Breast epithelium (tissue), 4 donors: ENCODE measurements at regions of chr14 and their contacts with region 1.

Region 1: GRCh38 chr14:57317316-57317715 is 48.5 kb downstream of the AP5M1 start:
- DNase-seq: peak; percentile 45 to 57
- H3K4me3 ChIP-seq: no peak overlapping the region
- H3K27ac ChIP-seq: no peak overlapping the region
- H3K4me1 ChIP-seq: no peaks in the 10 kb centered on the region
- H3K27me3 ChIP-seq: peaks cover 0 to 3% of the 10 kb centered on the region in 2 donors
- CTCF ChIP-seq: peak; percentile 59 to 65 (median 63)
- POLR2A ChIP-seq: no peak

Region 2: DNA sequence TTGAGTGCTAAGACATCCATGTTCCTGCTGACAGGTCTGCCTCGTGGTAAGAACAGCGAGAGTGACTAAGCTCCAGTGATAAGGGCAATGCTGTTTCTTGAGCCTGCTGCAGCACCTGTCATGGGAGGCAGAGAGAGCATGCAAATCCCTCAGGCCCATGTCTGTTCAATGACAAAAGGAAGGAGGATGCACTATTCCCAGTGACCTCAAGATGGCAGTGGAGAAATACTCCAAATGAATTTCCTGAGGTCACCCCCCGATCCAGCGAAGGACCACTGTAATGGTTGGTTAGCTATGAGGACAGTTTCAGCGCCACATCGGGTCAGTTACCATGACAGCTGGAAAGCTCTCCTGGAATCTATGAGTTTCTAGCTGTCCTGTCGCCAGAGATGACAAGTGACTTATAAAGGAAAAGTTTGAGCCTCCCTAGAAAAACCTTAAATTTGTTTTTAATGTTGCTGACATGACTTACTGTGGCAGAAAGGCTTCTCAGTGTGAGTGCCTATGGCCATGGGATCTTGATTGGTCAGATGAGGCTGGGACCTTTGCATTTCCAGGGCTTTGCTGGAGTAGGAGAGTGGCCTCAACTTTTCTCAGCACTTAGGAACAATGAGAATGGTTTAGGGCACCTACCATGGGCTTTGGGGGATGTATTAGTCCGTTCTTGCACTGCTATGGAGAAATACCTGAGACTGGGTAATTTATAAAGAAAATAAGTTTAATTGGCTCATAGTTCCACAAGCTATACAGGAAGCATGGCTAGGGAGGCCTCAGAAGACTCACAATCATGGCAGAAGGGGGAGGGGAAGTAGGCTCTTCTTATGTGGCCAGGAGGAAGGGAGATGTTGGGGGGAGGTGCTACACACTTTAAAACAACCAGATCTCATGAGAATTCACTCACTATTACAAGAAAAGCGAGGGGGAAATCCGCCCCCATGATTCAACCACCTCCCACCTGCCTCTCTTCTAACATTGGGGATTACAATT is 825.7 kb before region 1 on chr14:
- intact Hi-C with region 1: loop called (anchors 10 kb)
- DNase-seq: no peak
- H3K4me3 ChIP-seq: no peak overlapping the region
- H3K27ac ChIP-seq: no peak overlapping the region
- H3K4me1 ChIP-seq: no peaks in the 10 kb centered on the region
- H3K27me3 ChIP-seq: no peaks in the 10 kb centered on the region
- CTCF ChIP-seq: peak in 2 of 3 donors; percentile 51 to 64
- POLR2A ChIP-seq: no peak